Stomach (tissue), 19 donors: ENCODE measurements at regions of chr4 and their contacts with region 1.

Region 1: DNA sequence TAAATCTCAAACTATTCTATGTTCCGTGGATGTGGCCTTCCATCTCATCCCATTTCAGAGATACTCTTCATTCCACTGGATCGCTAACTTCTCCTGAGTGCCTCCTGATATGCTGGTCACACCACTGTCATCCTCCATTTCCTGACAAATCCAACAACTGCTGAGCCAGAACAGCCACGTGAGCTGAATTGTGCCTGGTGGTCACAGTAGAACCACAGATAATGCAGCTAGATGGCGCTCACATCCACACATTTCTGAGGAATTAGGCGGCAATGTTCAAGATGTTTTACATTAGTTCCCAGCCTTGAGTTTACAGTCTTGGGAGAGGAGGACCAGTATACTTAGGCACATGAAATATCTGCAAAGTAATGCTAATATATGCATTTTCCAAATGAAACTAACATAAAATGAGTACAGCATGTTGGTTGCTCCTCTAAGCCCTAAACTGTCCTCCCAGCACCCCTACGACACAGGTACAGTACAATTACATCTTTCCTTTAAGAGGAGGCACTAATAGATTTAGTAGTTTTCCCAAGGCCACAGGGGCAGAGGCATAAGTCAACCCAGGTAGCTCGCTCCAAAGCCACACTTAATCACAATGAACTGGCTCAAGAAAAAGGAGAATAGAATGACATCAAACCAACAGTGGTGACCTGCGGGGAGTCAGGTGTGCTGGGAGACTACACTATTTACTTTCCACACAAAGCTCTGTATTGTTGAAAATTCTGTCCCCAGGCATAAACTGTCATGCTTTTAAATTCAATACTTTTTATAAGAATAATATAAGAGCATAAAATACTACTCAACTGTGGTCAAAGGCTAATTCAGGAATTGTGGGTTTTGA is 134.2 kb downstream of the CHIC2 start:
- DNase-seq: peak; percentile 73 to 94
- H3K4me3 ChIP-seq: no peak overlapping the region
- H3K27ac ChIP-seq: no peak overlapping the region
- H3K4me1 ChIP-seq: peaks cover 0 to 6% (median 3%) of the 10 kb centered on the region in 4 donors
- H3K27me3 ChIP-seq: peaks cover 0 to 25% (median 0%) of the 10 kb centered on the region in 3 donors
- CTCF ChIP-seq: peak in 5 of 7 experiments; percentile 59 to 87 (median 66)
- EP300 ChIP-seq: no peak
- POLR2A ChIP-seq: no peak

Region 2: DNA sequence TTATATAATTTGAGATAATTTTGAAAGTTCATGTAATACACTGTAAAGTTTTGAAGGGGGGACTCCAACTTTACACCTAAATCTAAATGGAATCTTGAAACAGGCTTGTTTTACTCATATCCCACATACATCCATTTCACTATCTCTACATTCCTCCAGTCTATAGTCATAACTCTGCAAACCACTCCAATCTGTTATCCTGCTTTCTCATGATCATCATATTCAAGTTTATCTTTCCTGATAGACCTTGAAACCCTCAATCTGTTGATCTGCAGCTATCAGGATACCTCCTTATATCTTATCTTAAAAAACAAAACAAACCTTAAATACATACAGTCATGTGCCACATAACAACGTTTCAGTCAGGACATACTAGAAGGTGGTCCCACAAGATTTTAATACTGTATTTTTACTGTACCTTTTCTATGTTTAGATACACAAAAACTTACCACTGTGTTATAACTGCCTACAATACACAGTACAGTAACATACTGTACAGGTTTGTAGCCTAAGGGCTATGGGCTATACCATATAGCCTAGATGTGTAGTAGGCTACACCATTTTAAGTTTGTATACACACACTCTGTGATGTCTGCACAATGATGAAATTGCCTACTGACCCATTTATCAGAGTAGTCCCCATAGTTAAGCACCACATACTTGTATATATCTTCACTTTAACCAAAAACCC is 120.2 kb after region 1 on chr4:
- intact Hi-C with region 1: no loop called
- DNase-seq: no peak
- H3K4me3 ChIP-seq: no peak overlapping the region
- H3K27ac ChIP-seq: no peak overlapping the region
- H3K4me1 ChIP-seq: peaks cover 7 to 61% (median 30%) of the 10 kb centered on the region in 4 donors
- H3K27me3 ChIP-seq: no peaks in the 10 kb centered on the region
- CTCF ChIP-seq: no peak
- EP300 ChIP-seq: no peak
- POLR2A ChIP-seq: no peak

Region 3: GRCh38 chr4:54228056-54228527 is 297.9 kb after region 1 on chr4:
- intact Hi-C with region 1: loop called (anchors 5 kb)
- DNase-seq: peak; percentile 59 to 91
- H3K4me3 ChIP-seq: peak overlapping the region; percentile 26 to 54 (median 36)
- H3K27ac ChIP-seq: peak overlapping the region; percentile 16 to 80 (median 50)
- H3K4me1 ChIP-seq: peaks cover 51 to 76% (median 71%) of the 10 kb centered on the region in 4 donors
- H3K27me3 ChIP-seq: peaks cover 26 to 100% (median 87%) of the 10 kb centered on the region in 3 donors
- CTCF ChIP-seq: peak in 5 of 7 experiments; percentile 43 to 61 (median 51)
- EP300 ChIP-seq: no peak
- POLR2A ChIP-seq: no peak

Region 4: DNA sequence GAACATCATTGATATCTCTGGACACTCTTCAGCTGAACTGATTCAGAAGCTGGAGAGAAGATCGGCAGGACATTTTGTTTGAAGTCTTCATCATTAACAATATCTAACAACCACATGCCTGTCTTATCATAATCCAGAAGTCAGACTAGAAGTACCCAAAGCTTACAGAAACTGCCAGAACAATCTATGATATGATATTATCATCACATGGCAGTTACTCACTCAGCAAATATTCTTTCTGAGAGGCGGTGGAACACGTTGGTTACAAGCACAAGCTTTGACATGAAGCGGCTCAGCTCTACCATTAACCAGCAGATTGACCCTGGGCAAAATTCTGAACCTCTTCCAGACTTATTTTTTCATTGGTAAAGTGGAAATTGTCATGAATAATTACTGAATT is 658.2 kb after region 1 on chr4:
- intact Hi-C with region 1: no loop called
- DNase-seq: peak in 1 of 2 donors; percentile 8
- H3K4me3 ChIP-seq: no peak overlapping the region
- H3K27ac ChIP-seq: peak overlapping the region in 1 of 5 donors; percentile 17
- H3K4me1 ChIP-seq: no peaks in the 10 kb centered on the region
- H3K27me3 ChIP-seq: no peaks in the 10 kb centered on the region
- CTCF ChIP-seq: no peak
- EP300 ChIP-seq: no peak
- POLR2A ChIP-seq: no peak